Posterior cingulate gyrus (tissue), 11 donors: ENCODE measurements at regions of chr12 and their contacts with region 1.

Region 1: DNA sequence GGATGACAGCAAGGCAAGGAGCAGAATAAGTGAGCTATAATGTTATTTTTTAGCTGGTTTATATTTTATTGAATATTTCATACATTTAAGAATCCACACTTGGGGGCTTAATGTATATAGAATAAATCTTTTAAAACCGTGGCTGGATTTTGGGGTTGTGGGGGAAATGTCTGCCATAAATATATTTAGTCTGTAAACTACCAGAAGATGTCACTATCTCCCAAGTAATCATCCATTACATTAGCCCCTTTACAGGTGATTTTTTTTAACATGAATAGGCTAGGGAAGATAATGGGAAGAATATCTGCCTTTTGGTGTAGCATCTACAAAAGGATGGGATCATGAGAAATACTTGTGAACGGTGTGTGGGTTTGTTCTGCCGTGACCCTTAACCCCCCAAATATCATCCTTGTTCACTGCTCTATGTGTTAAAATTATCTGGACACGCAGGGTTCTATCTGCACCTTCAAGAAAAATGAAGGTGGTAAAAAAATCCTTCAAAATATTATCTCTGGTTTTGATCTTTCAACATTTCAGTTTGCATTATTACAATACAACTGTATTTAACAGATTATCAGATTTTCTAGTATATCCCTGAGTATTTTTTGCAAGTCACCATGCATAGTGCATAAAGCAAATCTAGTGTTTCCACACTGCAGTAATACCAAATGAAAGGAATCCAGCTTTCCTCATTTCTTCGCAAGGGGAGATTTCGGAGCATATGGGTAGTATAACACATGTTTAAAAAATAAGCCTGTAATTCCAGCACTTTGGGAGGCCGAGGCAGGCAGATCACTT is 8.0 kb upstream of the SLC17A8 start:
- DNase-seq: no peak

Region 2: DNA sequence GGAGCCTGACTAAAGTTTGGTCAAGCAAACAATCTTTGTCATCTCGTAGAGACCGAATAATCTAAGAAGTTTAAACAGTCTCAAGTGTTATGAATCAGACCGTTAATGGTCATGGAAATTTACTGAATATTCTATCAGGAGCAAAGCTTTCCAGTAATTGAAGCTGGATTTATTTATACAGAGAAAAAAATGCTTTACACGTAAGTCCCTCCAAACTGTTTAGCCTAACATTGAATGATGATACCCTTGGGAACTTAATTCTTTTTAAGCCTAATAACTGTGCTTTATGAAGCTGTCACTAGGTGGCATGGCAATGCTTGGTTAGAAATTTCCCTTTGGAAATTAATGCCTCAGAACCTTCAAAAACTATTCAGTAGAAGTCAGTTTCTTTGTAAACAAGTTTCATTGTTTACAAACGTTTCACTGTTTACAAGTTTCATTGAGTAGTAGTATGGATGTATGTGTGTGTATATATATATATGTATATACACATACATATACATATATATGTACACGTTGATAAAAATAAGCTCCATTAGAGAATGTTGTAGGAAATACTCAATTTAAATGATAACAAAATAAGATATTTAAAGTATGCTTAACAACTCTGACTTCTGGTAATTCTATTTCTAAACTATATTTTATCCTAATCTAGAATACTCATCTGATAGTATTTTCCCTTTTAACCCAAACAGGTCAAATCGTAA is 114.1 kb before region 1 on chr12:
- intact Hi-C with region 1: loop called (anchors 10 kb)
- DNase-seq: no peak

Region 3: DNA sequence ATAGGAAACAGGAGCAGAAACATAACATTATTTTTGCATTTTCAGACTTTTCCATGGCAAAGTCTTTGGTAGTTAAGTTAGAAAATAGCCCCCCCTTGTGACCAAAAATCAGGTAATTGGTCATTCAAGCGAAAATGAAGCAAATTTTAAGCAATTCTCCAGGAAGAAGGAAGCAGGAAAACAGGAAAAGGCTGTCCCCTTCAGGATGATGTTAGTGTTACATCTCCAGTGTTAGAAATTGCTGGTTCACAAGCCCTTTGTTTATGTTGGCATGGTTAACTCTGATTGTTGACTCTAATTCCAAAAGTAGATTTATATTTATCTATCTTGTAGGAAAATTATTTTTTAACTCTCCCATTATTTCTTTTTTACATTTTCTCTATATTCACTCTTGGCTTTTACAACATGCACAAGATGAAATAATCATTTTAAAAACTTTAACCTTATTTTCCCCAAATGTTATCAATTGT is 205.8 kb after region 1 on chr12:
- intact Hi-C with region 1: loop called (anchors 1 kb)
- DNase-seq: no peak

Region 4: DNA sequence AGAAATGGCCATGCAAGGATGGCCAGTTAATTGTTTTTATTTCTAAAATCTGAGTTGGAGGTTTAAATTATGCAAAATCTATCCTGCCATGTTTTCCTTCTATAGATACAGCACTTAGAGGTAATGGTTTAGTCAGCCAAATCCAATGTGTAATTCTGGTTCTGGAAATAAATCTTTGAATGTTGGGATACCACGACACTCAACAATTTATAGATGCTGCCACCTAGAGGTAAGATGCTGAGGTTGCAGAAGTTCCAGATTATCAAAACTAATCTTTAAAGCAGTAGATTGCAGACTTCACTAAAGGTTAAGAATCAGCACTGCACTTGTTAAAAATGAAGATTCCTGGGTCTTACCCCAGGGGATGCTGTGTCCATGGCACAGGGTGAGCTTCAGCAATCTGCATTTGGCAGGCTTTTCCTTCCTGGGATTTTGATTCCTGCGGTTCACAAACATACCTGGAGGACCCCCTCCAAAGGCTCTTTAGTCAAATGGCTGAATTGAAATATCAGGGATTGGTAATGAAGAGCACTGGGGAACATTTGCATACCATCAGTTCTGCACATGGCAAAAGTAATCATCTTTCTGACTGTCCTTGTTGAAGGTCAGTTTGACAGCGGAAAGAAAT is 392.3 kb after region 1 on chr12:
- intact Hi-C with region 1: loop called (anchors 2 kb)
- DNase-seq: no peak